ENCODE measurements at regions of chr12 and their contacts with region 1.

Region 1: DNA sequence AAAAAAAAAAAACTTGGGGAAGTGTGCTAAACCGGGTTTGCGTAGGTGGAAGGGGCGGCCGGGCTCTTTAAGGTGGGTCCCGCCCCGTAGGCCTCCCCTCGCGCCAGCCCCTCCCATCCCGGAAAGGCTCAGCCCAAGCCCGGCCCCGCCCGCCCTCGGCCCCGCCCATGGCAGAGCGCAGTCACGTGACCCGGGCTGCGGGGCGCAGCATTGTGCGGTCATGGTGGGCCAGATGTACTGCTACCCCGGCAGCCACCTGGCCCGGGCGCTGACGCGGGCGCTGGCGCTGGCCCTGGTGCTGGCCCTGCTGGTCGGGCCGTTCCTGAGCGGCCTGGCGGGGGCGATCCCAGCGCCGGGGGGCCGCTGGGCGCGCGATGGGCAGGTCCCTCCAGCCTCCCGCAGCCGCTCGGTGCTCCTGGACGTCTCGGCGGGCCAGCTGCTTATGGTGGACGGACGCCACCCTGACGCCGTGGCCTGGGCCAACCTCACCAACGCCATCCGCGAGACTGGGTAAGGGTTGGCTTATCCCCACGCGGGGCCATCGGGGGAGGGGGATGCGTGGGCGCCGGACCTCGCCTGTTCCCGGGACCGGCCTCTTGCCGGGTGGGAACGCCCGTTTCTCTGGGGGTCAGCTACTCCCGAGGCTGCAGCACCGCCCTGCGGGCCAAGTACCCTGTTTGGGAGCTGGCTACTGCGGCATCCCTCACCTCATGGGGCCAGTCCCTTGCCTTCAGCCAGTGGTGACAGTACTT is at the start of gene PLBD2:
- DNase-seq: peak; percentile 93
- H3K4me3 ChIP-seq: peak within 1 kb of the TSS; percentile 86 to 91
- H3K27ac ChIP-seq: peak within 1 kb of the TSS; percentile 82 to 84
- H3K4me1 ChIP-seq: peaks cover 9% of the 10 kb centered on the region
- H3K27me3 ChIP-seq: no peaks in the 10 kb centered on the region
- CTCF ChIP-seq: no peak
- POLR2A ChIP-seq: peak; percentile 45
- total RNA-seq, gene PLBD2: 48.2 to 114 TPM

Region 2: GRCh38 chr12:113184900-113185773 is 173.4 kb before region 1 on chr12 and contains the starts of genes DDX54 and RITA1:
- intact Hi-C with region 1: no loop called
- DNase-seq: peak; percentile 88
- H3K4me3 ChIP-seq: peak within 1 kb of the TSS; percentile 86 to 97
- H3K27ac ChIP-seq: peak within 1 kb of the TSS; percentile 87 to 91
- H3K4me1 ChIP-seq: no peaks in the 10 kb centered on the region
- H3K27me3 ChIP-seq: no peaks in the 10 kb centered on the region
- CTCF ChIP-seq: no peak
- POLR2A ChIP-seq: peak; percentile 35
- total RNA-seq, gene DDX54: 66.3 to 119 TPM
- total RNA-seq, gene RITA1: 29.0 to 39.7 TPM

Region 3: GRCh38 chr12:113334786-113335540 is 23.6 kb before region 1 on chr12 and contains the start of gene SLC8B1:
- intact Hi-C with region 1: loop called (anchors 2 kb)
- DNase-seq: peak; percentile 85
- H3K4me3 ChIP-seq: peak within 1 kb of the TSS; percentile 65 to 83
- H3K27ac ChIP-seq: peak within 1 kb of the TSS; percentile 64 to 75
- H3K4me1 ChIP-seq: no peaks in the 10 kb centered on the region
- H3K27me3 ChIP-seq: no peaks in the 10 kb centered on the region
- CTCF ChIP-seq: peak in 1 of 4 experiments; percentile 26
- POLR2A ChIP-seq: peak; percentile 95
- total RNA-seq, gene SLC8B1: 23.1 to 94.7 TPM

Measured in prostate gland (tissue), 2 donors.